Activated CD8-positive, alpha-beta T cell treated with anti-CD3 and anti-CD28 coated beads, Interleukin-2, amount 10 ng/mL, durations not matched to agents 7 days and 5 days (primary cell): ENCODE measurements at regions of chr19 and their contacts with region 1.

Region 1: GRCh38 chr19:34639491-34640085 is 37.4 kb downstream of the SCGB2B2 start:
- DNase-seq: peak; percentile 78
- ATAC-seq: no peak
- H3K4me3 Mint-ChIP-seq: no peak overlapping the region
- H3K27ac Mint-ChIP-seq: no peak overlapping the region
- H3K4me1 Mint-ChIP-seq: no peaks in the 10 kb centered on the region
- H3K27me3 Mint-ChIP-seq: no peaks in the 10 kb centered on the region

Region 2: GRCh38 chr19:34618410-34618809 is 21.2 kb before region 1 on chr19:
- CTCF ChIA-PET with region 1: no interaction called
- POLR2A ChIA-PET with region 1: no interaction called
- DNase-seq: no peak
- ATAC-seq: no peak
- H3K4me3 Mint-ChIP-seq: no peak overlapping the region
- H3K27ac Mint-ChIP-seq: no peak overlapping the region
- H3K4me1 Mint-ChIP-seq: no peaks in the 10 kb centered on the region
- H3K27me3 Mint-ChIP-seq: no peaks in the 10 kb centered on the region

Region 3: GRCh38 chr19:34651747-34652146 is 12.2 kb after region 1 on chr19:
- CTCF ChIA-PET with region 1: interaction called, 16 read pairs
- POLR2A ChIA-PET with region 1: no interaction called
- DNase-seq: no peak
- ATAC-seq: no peak
- H3K4me3 Mint-ChIP-seq: no peak overlapping the region
- H3K27ac Mint-ChIP-seq: no peak overlapping the region
- H3K4me1 Mint-ChIP-seq: no peaks in the 10 kb centered on the region
- H3K27me3 Mint-ChIP-seq: no peaks in the 10 kb centered on the region

Region 4: DNA sequence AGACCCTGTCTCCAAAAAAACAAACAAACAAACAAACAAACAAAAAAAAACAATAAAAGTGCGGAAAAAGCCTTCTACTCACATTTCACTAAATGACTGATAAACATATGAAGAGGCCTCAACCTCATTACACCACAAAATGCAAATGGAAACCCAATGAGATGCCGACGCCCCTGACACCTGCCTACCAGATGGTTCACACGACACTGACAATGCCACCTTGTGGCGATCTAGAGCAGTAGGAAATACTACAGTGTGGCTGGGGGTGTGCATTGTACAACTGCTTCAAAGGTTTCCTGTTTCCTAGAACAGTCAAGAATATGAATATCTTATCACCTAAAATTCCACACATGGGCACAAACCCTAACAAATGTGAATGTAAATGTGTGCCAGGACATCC is 23.3 kb after region 1 on chr19:
- CTCF ChIA-PET with region 1: interaction called, 12 read pairs
- POLR2A ChIA-PET with region 1: no interaction called
- DNase-seq: peak; percentile 65
- ATAC-seq: peak; percentile 93
- H3K4me3 Mint-ChIP-seq: no peak overlapping the region
- H3K27ac Mint-ChIP-seq: peak overlapping the region; percentile 2
- H3K4me1 Mint-ChIP-seq: peaks cover 26% of the 10 kb centered on the region
- H3K27me3 Mint-ChIP-seq: no peaks in the 10 kb centered on the region

Region 5: GRCh38 chr19:34677386-34678084 is 37.9 kb after region 1 on chr19 and contains the start of gene ZNF302:
- CTCF ChIA-PET with region 1: interaction called, 13 read pairs
- POLR2A ChIA-PET with region 1: interaction called, 3 read pairs
- DNase-seq: peak; percentile 95
- ATAC-seq: peak; percentile 89
- H3K4me3 Mint-ChIP-seq: peak within 1 kb of the TSS; percentile 88
- H3K27ac Mint-ChIP-seq: peak within 1 kb of the TSS; percentile 98
- H3K4me1 Mint-ChIP-seq: peaks cover 35% of the 10 kb centered on the region
- H3K27me3 Mint-ChIP-seq: peaks cover 5% of the 10 kb centered on the region
- total RNA-seq, gene ZNF302: 18.3 to 19.1 TPM

Region 6: GRCh38 chr19:34712395-34713261 is 73.0 kb after region 1 on chr19:
- CTCF ChIA-PET with region 1: interaction called, 60 read pairs
- POLR2A ChIA-PET with region 1: interaction called, 3 read pairs
- DNase-seq: peak; percentile 74
- ATAC-seq: peak; percentile 63
- H3K4me3 Mint-ChIP-seq: no peak overlapping the region
- H3K27ac Mint-ChIP-seq: no peak overlapping the region
- H3K4me1 Mint-ChIP-seq: no peaks in the 10 kb centered on the region
- H3K27me3 Mint-ChIP-seq: peaks cover 11% of the 10 kb centered on the region